Naive thymus-derived CD4-positive, alpha-beta T cell (primary cell): ENCODE measurements at regions of chr12 and their contacts with region 1.

Region 1: GRCh38 chr12:51994959-51995358 is 11.8 kb upstream of the TAMALIN start:
- DNase-seq: no peak
- ATAC-seq: no peak
- H3K4me3 ChIP-seq: no peak overlapping the region
- H3K4me3 Mint-ChIP-seq: no peak overlapping the region
- H3K27ac ChIP-seq: no peak overlapping the region
- H3K27ac Mint-ChIP-seq: peak overlapping the region in 1 of 9 donors; percentile 37
- H3K4me1 ChIP-seq: no peaks in the 10 kb centered on the region
- H3K4me1 Mint-ChIP-seq: peaks cover 4 to 8% (median 5%) of the 10 kb centered on the region in 7 donors
- H3K27me3 ChIP-seq: no peaks in the 10 kb centered on the region
- H3K27me3 Mint-ChIP-seq: no peaks in the 10 kb centered on the region

Region 2: GRCh38 chr12:51788876-51789275 is 206.1 kb before region 1 on chr12:
- CTCF ChIA-PET with region 1: no interaction called
- POLR2A ChIA-PET with region 1: no interaction called
- intact Hi-C with region 1: no loop called
- DNase-seq: no peak
- ATAC-seq: no peak
- H3K4me3 ChIP-seq: no peak overlapping the region
- H3K4me3 Mint-ChIP-seq: no peak overlapping the region
- H3K27ac ChIP-seq: no peak overlapping the region
- H3K27ac Mint-ChIP-seq: no peak overlapping the region
- H3K4me1 ChIP-seq: no peaks in the 10 kb centered on the region
- H3K4me1 Mint-ChIP-seq: peaks cover 0 to 6% (median 5%) of the 10 kb centered on the region in 7 donors
- H3K27me3 ChIP-seq: no peaks in the 10 kb centered on the region
- H3K27me3 Mint-ChIP-seq: peaks cover 0 to 8% (median 0%) of the 10 kb centered on the region in 5 donors

Region 3: DNA sequence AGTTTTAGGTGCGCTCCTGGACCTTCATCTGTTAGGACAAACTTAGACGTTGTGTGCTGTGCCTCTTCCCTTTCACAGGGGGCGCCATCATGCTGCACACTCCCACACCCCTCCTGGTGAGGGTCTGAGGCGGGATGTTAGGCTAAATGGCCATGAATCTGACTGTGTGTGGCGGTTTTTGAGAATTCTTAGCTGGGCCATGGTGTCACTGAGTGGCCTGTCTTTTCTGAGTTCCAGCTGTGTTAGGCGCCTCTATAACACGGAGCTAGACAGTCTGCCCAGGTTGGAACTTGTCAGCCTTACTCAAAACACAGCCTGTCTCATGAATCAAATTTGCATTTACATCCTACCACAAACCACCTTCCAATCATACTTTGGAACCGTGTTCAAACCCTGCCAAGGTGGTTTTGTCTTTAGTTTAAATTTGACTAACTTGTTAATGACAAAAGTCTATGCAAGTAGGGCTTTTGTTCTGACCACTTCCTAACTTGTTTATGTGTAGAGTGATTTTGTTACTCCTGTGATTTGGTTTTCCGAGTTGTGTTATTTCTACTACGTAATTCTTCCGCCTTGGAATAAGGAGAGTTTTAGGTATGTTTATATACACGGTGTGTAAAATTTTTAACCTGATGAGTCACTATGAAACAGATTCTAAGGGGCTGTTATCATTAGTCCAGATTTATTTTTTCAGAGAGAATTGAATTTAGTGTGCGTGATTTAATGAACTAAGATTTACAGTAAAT is 23.9 kb before region 1 on chr12:
- CTCF ChIA-PET with region 1: interaction called, 11 read pairs
- POLR2A ChIA-PET with region 1: no interaction called
- intact Hi-C with region 1: no loop called
- DNase-seq: peak in 2 of 9 donors; percentile 26 to 43
- ATAC-seq: peak; percentile 53
- H3K4me3 ChIP-seq: peak overlapping the region; percentile 1
- H3K4me3 Mint-ChIP-seq: peak overlapping the region; percentile 41 to 85 (median 72)
- H3K27ac ChIP-seq: no peak overlapping the region
- H3K27ac Mint-ChIP-seq: peak overlapping the region; percentile 43 to 87 (median 68)
- H3K4me1 ChIP-seq: peaks cover 56 to 64% of the 10 kb centered on the region in 2 donors
- H3K4me1 Mint-ChIP-seq: peaks cover 60 to 76% (median 69%) of the 10 kb centered on the region in 7 donors
- H3K27me3 ChIP-seq: no peaks in the 10 kb centered on the region
- H3K27me3 Mint-ChIP-seq: peaks cover 0 to 26% (median 0%) of the 10 kb centered on the region in 5 donors

Region 4: DNA sequence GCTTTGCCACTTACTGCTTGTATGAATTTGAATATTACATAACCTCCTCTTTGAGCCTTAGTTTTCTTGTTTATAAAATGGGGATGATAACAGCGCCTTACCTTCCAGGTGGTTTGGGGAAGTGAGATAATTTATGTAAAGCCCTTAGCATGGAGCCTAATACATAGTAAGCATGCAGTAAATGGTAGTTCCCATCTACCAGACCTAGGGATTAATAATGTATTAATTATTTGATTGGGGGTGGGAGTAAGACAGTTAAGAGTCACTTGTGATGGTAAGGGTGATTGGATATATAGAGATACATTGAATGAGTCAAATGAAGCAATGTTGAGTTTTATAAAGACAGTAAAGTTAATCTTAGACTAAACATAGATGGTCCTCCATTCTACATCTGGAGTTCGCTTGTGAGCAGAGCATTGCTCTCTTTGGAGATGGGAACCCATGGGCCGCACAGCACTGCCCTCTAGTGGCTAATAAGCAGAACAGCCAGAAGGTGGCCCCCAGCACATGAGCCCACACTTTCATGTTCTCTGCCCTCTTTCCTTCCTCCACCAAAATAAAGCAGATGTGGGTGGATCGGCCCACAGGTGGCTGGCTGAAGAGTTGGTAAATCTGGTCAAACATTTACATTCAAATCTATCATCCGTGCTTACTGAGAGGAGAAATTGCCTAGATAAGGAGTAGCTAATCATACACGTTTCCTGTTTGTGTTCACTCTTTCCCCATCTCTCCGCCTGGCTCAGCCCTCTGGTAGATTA is 14.7 kb before region 1 on chr12:
- CTCF ChIA-PET with region 1: interaction called, 26 read pairs
- POLR2A ChIA-PET with region 1: no interaction called
- intact Hi-C with region 1: no loop called
- DNase-seq: peak; percentile 39 to 76 (median 65)
- ATAC-seq: peak; percentile 99
- H3K4me3 ChIP-seq: no peak overlapping the region
- H3K4me3 Mint-ChIP-seq: peak overlapping the region in 3 of 10 donors; percentile 7 to 45 (median 32)
- H3K27ac ChIP-seq: no peak overlapping the region
- H3K27ac Mint-ChIP-seq: peak overlapping the region in 5 of 9 donors; percentile 25 to 74 (median 48)
- H3K4me1 ChIP-seq: peaks cover 5 to 10% of the 10 kb centered on the region in 2 donors
- H3K4me1 Mint-ChIP-seq: peaks cover 24 to 32% (median 28%) of the 10 kb centered on the region in 7 donors
- H3K27me3 ChIP-seq: no peaks in the 10 kb centered on the region
- H3K27me3 Mint-ChIP-seq: peaks cover 0 to 5% (median 0%) of the 10 kb centered on the region in 5 donors

Region 5: DNA sequence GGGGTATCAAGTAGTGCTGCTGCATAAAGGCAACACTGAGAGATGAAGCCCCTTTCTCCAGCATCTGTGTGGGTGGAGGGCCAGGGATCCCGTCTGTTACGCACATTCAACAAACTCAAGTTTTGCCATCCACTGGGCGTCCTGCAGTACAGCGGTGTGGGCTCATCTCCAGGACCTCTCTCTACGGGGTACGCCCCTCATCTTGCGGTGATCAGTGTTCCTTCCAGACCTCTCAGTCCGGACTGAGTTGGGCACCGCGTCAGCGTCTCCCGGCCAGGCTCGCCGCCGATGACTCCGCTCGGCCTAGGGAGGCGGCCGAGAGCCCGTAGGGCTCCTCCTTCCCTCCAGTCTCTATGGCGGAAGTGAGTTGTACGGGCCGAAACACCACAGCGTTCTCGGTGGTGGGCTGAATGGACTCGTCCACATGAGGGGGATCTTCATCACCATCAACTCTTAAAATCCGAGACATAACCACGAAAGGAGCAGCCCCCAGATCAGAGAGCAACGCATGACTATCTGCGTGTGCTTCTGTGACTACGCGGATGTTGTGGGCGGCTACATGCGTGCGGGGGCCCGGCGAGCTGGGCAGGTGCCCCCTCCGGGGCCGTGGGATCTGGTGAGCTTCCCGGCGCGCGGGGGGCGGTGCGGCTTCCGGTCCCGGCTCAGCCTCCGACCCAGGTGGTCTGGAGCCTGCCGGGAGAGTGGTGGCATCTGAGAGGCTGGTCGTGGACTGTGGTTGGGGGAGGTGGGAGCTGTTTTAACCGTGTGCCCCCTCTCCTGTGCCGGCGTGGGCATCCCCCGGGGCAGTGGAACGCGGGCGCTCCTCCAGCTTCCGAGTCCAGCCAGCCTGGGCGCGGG is 74.6 kb after region 1 on chr12 and contains the start of gene ATG101:
- CTCF ChIA-PET with region 1: interaction called, 3 read pairs
- POLR2A ChIA-PET with region 1: no interaction called
- intact Hi-C with region 1: loop called in 1 of 2 experiments (anchors 2 kb)
- DNase-seq: peak; percentile 80 to 92 (median 89)
- ATAC-seq: peak; percentile 97
- H3K4me3 ChIP-seq: peak within 1 kb of the TSS; percentile 96
- H3K4me3 Mint-ChIP-seq: peak within 1 kb of the TSS; percentile 88 to 99 (median 96)
- H3K27ac ChIP-seq: peak within 1 kb of the TSS; percentile 87
- H3K27ac Mint-ChIP-seq: peak within 1 kb of the TSS; percentile 97 to 100 (median 98)
- H3K4me1 ChIP-seq: peaks cover 19 to 31% of the 10 kb centered on the region in 2 donors
- H3K4me1 Mint-ChIP-seq: peaks cover 35 to 59% (median 49%) of the 10 kb centered on the region in 7 donors
- H3K27me3 ChIP-seq: no peaks in the 10 kb centered on the region
- H3K27me3 Mint-ChIP-seq: peaks cover 0 to 5% (median 0%) of the 10 kb centered on the region in 5 donors
- total RNA-seq, gene ATG101: 20.7 to 39.7 (median 34.3) TPM

Region 6: DNA sequence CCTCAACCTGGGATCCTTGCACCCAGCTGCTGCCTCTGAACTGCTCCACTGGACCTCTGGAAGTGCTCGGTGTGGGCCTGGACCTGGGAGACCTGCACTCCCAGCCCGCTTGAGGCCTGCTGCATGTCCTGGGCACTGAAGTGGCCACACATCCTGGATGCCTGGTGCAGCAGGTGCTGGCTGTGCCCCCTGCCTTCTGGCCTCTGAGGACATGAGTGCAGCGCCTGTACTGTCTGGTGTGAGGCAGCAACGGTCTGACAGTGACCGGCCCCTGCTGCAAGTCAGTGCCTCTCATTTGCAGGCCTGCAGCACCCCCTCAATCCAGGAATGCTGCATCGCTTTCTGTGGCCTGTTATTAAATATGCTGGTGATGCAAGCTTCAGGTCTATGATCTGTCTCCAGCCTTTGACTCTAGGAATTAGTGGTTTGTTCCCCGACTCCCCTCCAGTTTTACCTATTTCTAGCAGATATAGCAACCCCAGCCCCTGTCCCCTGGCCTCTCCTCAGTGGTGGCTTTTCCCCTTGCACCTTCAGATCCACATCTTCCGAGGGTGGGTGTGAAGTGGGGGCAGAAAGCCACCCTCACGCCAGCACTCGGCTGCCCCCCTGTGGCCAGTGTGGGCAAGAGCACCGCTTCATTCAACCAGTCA is 88.2 kb after region 1 on chr12:
- CTCF ChIA-PET with region 1: interaction called, 10 read pairs
- POLR2A ChIA-PET with region 1: no interaction called
- intact Hi-C with region 1: loop called (anchors 1 kb)
- DNase-seq: peak; percentile 49 to 74 (median 66)
- ATAC-seq: peak; percentile 86
- H3K4me3 ChIP-seq: no peak overlapping the region
- H3K4me3 Mint-ChIP-seq: peak overlapping the region in 2 of 10 donors; percentile 17 to 52
- H3K27ac ChIP-seq: no peak overlapping the region
- H3K27ac Mint-ChIP-seq: peak overlapping the region in 4 of 9 donors; percentile 47 to 83 (median 72)
- H3K4me1 ChIP-seq: peaks cover 0 to 12% of the 10 kb centered on the region in 2 donors
- H3K4me1 Mint-ChIP-seq: peaks cover 6 to 17% (median 12%) of the 10 kb centered on the region in 7 donors
- H3K27me3 ChIP-seq: no peaks in the 10 kb centered on the region
- H3K27me3 Mint-ChIP-seq: peaks cover 4 to 14% (median 10%) of the 10 kb centered on the region in 5 donors

Region 7: DNA sequence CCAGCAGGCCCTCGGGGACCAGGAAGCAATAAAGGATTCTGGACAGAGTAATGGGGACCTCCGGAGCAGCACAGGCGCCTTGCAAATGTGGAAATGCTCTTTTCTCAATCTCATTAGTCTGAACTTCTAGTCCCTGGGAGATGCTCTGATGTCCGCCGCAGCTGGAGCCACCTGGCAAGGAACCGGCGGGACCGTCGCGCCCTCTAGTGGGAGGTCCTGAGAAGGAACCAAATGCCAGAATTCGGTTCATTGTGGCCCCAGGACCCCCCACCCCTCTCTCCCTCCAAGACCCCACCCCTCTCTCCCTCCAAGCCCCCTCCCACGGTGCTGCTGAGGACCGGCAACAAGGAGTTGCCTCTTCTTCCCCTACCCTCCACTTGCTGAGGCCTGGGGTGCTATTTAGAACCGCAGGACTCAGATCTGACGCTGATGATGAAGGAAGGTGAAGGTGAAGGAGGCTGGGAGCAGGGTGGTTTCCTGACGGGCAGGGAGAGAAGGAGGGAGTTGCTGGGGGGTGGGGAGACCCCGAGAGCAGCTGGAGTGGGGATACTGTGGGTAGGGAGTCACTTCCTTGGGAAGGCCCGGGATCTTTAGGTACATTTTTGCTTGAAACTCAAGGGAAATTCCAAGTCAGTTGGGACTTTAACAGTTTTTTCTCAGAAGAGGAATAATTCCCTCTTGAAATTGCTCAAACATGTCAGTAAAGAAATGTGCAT is 127.0 kb after region 1 on chr12:
- CTCF ChIA-PET with region 1: no interaction called
- POLR2A ChIA-PET with region 1: no interaction called
- intact Hi-C with region 1: loop called in 1 of 2 experiments (anchors 1 kb)
- DNase-seq: peak in 8 of 9 donors; percentile 24 to 73 (median 46)
- ATAC-seq: peak; percentile 55
- H3K4me3 ChIP-seq: no peak overlapping the region
- H3K4me3 Mint-ChIP-seq: peak overlapping the region in 4 of 10 donors; percentile 20 to 41 (median 24)
- H3K27ac ChIP-seq: no peak overlapping the region
- H3K27ac Mint-ChIP-seq: no peak overlapping the region
- H3K4me1 ChIP-seq: peaks cover 0 to 3% of the 10 kb centered on the region in 2 donors
- H3K4me1 Mint-ChIP-seq: peaks cover 4 to 19% (median 12%) of the 10 kb centered on the region in 7 donors
- H3K27me3 ChIP-seq: no peaks in the 10 kb centered on the region
- H3K27me3 Mint-ChIP-seq: peaks cover 9 to 22% (median 21%) of the 10 kb centered on the region in 5 donors